Activated naive CD8-positive, alpha-beta T cell treated with anti-CD3 and anti-CD28 coated beads, Interleukin-2, amount 10 ng/mL, durations not matched to agents 7 days and 5 days (primary cell): ENCODE measurements at regions of chr11 and their contacts with region 1.

Region 1: GRCh38 chr11:62400760-62401159 is 18.1 kb upstream of the SCGB1A1 start:
- DNase-seq: no peak
- ATAC-seq: no peak
- H3K4me3 Mint-ChIP-seq: no peak overlapping the region
- H3K27ac Mint-ChIP-seq: no peak overlapping the region
- H3K4me1 Mint-ChIP-seq: peaks cover 27% of the 10 kb centered on the region
- H3K27me3 Mint-ChIP-seq: no peaks in the 10 kb centered on the region

Region 2: GRCh38 chr11:62427630-62428233 is 27.0 kb after region 1 on chr11:
- POLR2A ChIA-PET with region 1: interaction called, 12 read pairs
- DNase-seq: no peak
- ATAC-seq: peak; percentile 28
- H3K4me3 Mint-ChIP-seq: peak overlapping the region; percentile 29
- H3K27ac Mint-ChIP-seq: peak overlapping the region; percentile 90
- H3K4me1 Mint-ChIP-seq: peaks cover 38% of the 10 kb centered on the region
- H3K27me3 Mint-ChIP-seq: peaks cover 11% of the 10 kb centered on the region

Region 3: GRCh38 chr11:62438641-62439040 is 37.9 kb after region 1 on chr11:
- POLR2A ChIA-PET with region 1: no interaction called
- DNase-seq: no peak
- ATAC-seq: no peak
- H3K4me3 Mint-ChIP-seq: no peak overlapping the region
- H3K27ac Mint-ChIP-seq: no peak overlapping the region
- H3K4me1 Mint-ChIP-seq: peaks cover 16% of the 10 kb centered on the region
- H3K27me3 Mint-ChIP-seq: peaks cover 2% of the 10 kb centered on the region

Region 4: GRCh38 chr11:62542750-62543567 is 142.2 kb after region 1 on chr11:
- POLR2A ChIA-PET with region 1: interaction called, 14 read pairs
- DNase-seq: peak; percentile 88
- ATAC-seq: peak; percentile 43
- H3K4me3 Mint-ChIP-seq: peak overlapping the region; percentile 73
- H3K27ac Mint-ChIP-seq: peak overlapping the region; percentile 83
- H3K4me1 Mint-ChIP-seq: peaks cover 52% of the 10 kb centered on the region
- H3K27me3 Mint-ChIP-seq: peaks cover 9% of the 10 kb centered on the region